ENCODE measurements at regions of chr3 and their contacts with region 1.

Region 1: GRCh38 chr3:149812606-149813366 is at the start of gene RNF13:
- DNase-seq: peak; percentile 97
- H3K4me3 ChIP-seq: peak within 1 kb of the TSS; percentile 59 to 84 (median 83)
- H3K27ac ChIP-seq: peak within 1 kb of the TSS; percentile 65
- H3K4me1 ChIP-seq: peaks cover 24% of the 10 kb centered on the region
- H3K27me3 ChIP-seq: no peaks in the 10 kb centered on the region
- CTCF ChIP-seq: no peak
- POLR2A ChIP-seq: peak; percentile 78
- total RNA-seq, gene RNF13: 27.1 and 29.5 TPM in 2 replicates

Region 2: DNA sequence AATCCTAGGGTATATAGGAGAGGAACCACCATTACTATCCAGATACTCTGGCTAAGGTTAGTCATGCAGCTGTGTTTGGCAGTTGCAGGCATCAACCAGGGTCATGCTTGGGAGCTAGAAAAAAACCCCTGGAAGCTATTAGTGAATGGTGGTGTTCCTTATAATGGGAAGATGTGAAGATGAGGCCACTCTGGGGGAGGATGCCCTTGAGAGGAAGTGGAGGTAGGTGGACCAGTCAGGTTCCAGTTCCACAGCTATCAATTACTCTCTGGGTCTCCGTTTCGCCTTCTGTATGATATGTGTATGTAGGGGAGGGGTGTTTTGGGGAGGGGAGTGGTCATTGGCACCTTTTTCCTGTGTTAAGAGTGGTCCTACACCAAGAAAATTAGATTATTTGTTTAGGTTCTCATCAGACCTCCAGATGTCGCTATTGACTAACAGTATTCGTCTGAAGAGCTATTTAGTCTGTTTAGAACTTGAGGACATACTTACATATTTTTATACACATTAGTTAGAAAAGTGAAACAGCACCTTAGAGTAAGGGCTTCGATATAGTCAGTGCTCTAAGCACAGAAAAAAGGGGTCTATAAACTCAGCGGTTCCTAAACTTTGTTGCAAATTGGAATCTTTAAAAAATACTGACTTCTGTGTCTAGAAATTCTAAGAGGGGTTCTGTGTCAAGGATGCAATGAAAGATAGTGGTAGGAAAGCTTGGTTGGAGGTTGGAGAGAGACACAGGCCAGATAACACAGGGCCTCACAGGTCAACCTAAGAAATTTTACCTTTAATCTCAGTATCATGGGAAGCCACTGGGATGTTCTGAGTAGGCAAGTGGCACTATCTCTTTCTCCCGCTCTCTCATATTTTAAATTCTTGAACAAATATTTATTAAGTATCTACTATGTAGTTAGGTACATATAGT is 692.5 kb before region 1 on chr3:
- CTCF ChIA-PET with region 1: interaction called, 15 read pairs
- POLR2A ChIA-PET with region 1: no interaction called
- dilution Hi-C with region 1: no loop called
- intact Hi-C with region 1: no loop called
- DNase-seq: peak; percentile 80
- H3K4me3 ChIP-seq: no peak overlapping the region
- H3K27ac ChIP-seq: no peak overlapping the region
- H3K4me1 ChIP-seq: no peaks in the 10 kb centered on the region
- H3K27me3 ChIP-seq: no peaks in the 10 kb centered on the region
- CTCF ChIP-seq: peak; percentile 21 to 39
- POLR2A ChIP-seq: no peak

Region 3: GRCh38 chr3:149494022-149494758 is 318.6 kb before region 1 on chr3:
- CTCF ChIA-PET with region 1: interaction called, 122 read pairs
- POLR2A ChIA-PET with region 1: no interaction called
- dilution Hi-C with region 1: no loop called
- intact Hi-C with region 1: loop called (anchors 1 kb)
- DNase-seq: peak; percentile 76
- H3K4me3 ChIP-seq: no peak overlapping the region
- H3K27ac ChIP-seq: no peak overlapping the region
- H3K4me1 ChIP-seq: peaks cover 6% of the 10 kb centered on the region
- H3K27me3 ChIP-seq: no peaks in the 10 kb centered on the region
- CTCF ChIP-seq: peak; percentile 80 to 83
- POLR2A ChIP-seq: no peak

Region 4: DNA sequence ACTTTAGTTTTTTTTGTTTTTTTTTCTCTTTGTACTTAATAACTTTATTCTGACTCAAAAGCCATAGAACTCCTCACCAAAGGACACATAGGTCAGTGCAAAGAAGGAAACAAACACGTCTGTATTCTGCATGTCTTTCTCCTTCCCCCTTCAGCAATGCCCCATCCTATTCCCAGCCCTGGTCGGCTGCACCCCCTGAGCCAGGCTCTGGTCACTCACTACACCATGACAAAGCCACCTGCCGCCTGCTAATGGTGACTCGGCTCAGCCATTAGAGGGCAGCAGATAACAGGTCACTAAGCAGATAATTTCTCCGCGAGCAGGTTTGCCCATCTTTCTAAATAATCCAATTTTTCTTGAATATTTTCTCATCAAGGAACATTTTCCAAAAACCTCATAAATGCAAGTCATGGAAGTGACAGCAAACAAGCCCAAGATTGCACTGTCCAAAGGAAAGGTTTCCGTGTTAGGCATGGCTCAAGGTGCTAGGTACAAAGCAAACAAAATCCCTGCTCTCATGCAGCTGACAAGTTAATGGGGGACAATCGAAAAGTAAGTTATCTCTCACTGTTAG is 300.5 kb before region 1 on chr3:
- CTCF ChIA-PET with region 1: interaction called, 75 read pairs
- POLR2A ChIA-PET with region 1: no interaction called
- dilution Hi-C with region 1: no loop called
- intact Hi-C with region 1: loop called (anchors 1 kb)
- DNase-seq: peak; percentile 77
- H3K4me3 ChIP-seq: no peak overlapping the region
- H3K27ac ChIP-seq: no peak overlapping the region
- H3K4me1 ChIP-seq: peaks cover 18% of the 10 kb centered on the region
- H3K27me3 ChIP-seq: no peaks in the 10 kb centered on the region
- CTCF ChIP-seq: peak; percentile 66 to 71
- POLR2A ChIP-seq: no peak

Region 5: DNA sequence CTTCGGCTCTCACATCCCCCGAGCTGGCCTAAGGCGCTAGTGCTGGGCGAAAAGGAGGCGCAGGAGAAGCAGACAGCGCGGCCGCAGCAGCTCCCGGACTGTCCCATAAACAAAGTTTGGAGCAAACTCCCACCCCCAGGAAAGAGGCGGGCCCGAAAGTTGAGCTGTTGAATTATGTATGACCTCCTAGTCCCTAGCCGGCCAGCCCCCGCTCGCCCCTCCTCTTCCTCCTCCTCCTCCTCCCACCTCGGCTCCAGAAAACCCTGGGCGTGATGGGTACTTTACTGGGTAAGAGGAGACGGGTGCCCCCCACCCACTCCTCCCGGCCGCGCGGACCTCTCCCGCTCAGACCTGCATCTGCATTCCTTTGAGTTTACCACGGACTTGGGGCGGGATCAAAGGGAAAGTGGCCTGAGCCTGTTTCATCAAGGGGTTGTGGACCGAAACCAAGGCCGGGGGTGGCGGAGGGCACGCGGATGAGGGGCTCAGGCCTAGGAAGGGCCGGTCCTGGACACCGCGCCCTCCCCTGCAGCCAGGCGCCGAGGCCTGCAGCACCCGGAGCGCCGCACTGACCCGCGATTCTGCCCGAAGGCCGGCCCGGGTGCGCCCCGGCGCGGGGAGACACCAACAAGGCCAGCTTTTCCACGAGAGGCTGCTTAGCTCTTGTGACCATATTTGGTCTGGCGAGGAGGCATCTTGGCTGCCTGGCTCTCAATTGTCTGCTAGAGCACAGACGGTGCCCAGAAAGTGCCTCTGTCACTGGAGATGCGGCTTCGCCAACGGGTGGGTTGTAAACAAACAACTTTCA is 154.7 kb before region 1 on chr3 and contains the start of gene WWTR1:
- CTCF ChIA-PET with region 1: interaction called, 12 read pairs
- POLR2A ChIA-PET with region 1: interaction called, 4 read pairs
- dilution Hi-C with region 1: no loop called
- intact Hi-C with region 1: loop called (anchors 5 kb)
- DNase-seq: peak; percentile 97
- H3K4me3 ChIP-seq: peak within 1 kb of the TSS; percentile 87 to 99 (median 98)
- H3K27ac ChIP-seq: peak within 1 kb of the TSS; percentile 85
- H3K4me1 ChIP-seq: peaks cover 39% of the 10 kb centered on the region
- H3K27me3 ChIP-seq: no peaks in the 10 kb centered on the region
- CTCF ChIP-seq: no peak
- POLR2A ChIP-seq: peak; percentile 99
- total RNA-seq, gene WWTR1: 210 and 262 TPM in 2 replicates

Region 6: DNA sequence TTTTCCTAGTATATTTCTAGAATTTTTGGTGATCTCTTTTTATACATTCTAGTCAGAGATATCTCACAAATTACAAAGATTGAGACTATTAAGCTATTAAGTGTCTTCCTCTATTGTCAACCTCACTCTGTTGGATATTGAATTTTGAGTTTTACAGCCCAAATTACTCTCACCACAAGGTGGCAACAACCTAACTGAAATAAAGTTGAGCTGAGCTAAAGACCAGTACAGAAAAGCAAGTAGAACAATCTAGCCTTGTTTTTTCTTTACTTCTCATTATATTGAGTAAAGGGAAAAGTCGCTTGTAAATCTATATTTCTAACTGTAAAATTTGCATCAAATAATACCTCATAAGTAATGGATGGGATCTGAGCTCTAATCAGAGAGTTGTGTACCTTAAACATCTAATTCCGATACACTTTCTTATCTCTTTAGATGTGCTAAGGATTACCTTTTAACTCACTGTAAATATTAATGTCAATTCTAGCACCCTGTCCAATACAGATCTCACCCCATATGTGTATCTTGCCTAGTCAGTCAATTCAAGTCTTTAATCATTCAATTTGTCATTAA is 46.9 kb before region 1 on chr3:
- CTCF ChIA-PET with region 1: interaction called, 263 read pairs
- POLR2A ChIA-PET with region 1: no interaction called
- dilution Hi-C with region 1: no loop called
- intact Hi-C with region 1: loop called (anchors 1 kb)
- DNase-seq: peak; percentile 59
- H3K4me3 ChIP-seq: no peak overlapping the region
- H3K27ac ChIP-seq: no peak overlapping the region
- H3K4me1 ChIP-seq: no peaks in the 10 kb centered on the region
- H3K27me3 ChIP-seq: peaks cover 33 to 42% of the 10 kb centered on the region in 2 experiments
- CTCF ChIP-seq: peak; percentile 20 to 39
- POLR2A ChIP-seq: no peak

Region 7: GRCh38 chr3:149783576-149783975 is 29.2 kb before region 1 on chr3:
- CTCF ChIA-PET with region 1: interaction called, 24 read pairs
- POLR2A ChIA-PET with region 1: no interaction called
- dilution Hi-C with region 1: no loop called
- intact Hi-C with region 1: no loop called
- DNase-seq: peak; percentile 33
- H3K4me3 ChIP-seq: no peak overlapping the region
- H3K27ac ChIP-seq: no peak overlapping the region
- H3K4me1 ChIP-seq: peaks cover 8% of the 10 kb centered on the region
- H3K27me3 ChIP-seq: peaks cover 0 to 3% of the 10 kb centered on the region in 2 experiments
- CTCF ChIP-seq: no peak
- POLR2A ChIP-seq: no peak